RWPE1 (cell line): ENCODE measurements at regions of chr2 and their contacts with region 1.

Region 1: GRCh38 chr2:21042958-21043743 is 722 bp downstream of the APOB start:
- DNase-seq: peak; percentile 56
- H3K27ac ChIP-seq: no peak overlapping the region
- CTCF ChIP-seq: peak; percentile 97

Region 2: GRCh38 chr2:21104030-21104660 is 61.0 kb after region 1 on chr2:
- CTCF ChIA-PET with region 1: no interaction called
- POLR2A ChIA-PET with region 1: no interaction called
- DNase-seq: no peak
- H3K27ac ChIP-seq: no peak overlapping the region
- CTCF ChIP-seq: no peak

Region 3: GRCh38 chr2:21117688-21118087 is 74.5 kb after region 1 on chr2:
- CTCF ChIA-PET with region 1: interaction called, 10 read pairs
- POLR2A ChIA-PET with region 1: no interaction called
- DNase-seq: no peak
- H3K27ac ChIP-seq: no peak overlapping the region
- CTCF ChIP-seq: no peak